Right ventricle myocardium superior (tissue), 1 donor: ENCODE measurements at regions of chr5 and their contacts with region 1.

Region 1: DNA sequence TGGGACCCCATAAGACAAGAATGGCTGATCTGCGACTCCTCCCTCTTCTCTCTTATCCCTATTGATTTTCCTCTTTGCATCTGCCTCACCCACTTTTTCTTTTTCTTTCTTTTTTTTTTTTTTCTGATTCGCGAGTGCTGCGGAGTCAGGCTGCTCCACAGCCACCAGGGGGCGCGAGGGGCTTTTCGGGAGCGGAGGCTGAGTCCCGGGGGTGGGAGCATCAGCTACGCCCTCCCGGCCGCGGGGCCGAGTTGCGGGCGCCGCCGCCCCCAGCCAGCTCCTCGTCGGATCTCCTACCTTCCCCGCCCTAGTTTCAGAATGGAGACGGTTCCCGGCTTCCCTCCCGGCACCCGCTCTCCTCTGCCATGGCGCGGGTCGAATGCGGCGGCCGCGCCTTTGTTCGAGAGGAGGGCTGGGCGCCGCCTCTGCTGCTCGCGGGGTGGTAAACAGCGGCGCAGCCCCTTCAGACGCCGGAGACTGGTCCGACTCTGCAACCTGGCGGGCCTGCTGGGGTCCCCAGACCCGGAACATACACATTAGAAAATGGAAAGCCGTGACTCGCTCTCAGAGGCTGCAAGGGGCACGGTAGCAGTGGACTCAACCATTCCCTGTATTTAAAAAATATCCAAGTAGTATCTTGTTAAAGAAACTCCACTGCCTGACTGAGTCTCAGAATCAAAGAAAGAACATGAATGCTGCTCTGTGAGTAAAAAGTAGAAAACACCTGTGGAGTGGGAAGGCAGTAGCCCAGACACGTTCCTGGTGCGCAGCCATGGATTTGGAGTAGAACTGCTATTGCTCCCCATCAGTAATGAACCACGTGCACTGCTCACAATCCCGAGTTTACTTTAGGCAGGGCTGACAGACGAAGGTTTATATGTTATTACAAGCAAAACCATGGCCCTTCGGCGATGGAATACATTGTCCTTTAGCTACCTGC is 55.7 kb downstream of the DPYSL3 start:
- DNase-seq: peak; percentile 92
- ATAC-seq: peak; percentile 93

Region 2: GRCh38 chr5:147483961-147484707 is 30.0 kb after region 1 on chr5:
- intact Hi-C with region 1: no loop called
- DNase-seq: peak; percentile 83
- ATAC-seq: peak; percentile 78

Region 3: DNA sequence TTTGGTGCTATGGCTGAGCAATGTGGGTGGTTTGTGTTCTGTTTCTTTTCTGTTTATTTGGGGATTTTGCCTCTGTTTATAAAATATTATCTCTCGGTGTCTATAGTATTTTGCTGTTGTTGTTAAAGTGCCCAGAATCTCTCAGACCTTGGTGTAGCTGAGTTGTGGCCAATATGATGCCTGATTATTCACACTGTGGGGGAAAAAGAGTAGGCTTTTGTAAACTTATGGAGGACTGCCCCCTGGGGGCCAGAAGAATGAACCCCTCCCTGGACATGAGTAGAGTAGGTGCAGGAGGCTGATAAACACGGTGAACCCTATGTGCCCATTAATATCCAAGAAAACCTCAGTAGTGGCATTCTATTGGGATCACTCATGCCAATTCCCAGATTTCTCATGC is 104.7 kb after region 1 on chr5:
- intact Hi-C with region 1: loop called (anchors 5 kb)
- DNase-seq: peak; percentile 62
- ATAC-seq: peak; percentile 74

Region 4: DNA sequence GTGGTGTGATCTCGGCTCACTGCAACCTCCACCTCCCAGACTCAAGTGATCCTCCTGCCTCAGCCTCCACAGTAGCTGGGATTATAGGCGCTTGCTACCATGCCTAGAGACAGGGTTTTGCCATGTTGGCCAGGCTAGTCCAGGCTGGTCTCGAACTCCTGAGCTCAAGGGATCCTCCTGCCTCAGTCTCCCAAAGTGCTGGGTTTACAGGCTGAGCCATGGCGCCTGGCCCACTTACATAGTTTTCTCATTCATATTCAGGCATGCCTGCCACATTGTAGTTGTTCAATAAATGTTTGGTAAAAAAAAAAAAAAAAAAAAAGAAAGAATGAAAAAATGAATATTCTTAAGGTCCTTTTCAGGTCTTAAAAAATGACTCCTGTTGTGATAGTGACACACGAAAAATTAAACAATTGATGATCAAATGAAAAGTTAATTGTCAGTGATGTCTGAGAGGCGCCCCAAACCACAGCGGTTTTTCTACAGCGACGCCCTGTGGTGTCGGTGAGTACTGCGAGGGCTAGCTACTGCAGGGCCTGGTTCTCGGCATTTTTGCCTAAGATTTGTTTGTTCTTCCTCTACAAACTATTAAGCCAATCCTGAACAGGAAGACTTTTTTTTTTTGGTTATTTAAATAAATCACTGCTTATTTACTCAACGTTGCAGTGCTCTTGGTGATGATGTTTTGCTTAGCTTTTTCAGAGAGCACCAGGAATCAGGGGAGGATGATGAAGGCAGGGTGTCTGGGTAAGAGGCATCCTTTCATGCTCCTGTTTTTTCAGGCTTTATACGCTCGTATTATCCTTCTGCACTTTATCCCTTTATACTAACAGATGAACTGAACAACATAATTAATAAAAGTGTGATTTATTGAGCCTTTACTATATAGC is 122.7 kb after region 1 on chr5:
- intact Hi-C with region 1: loop called (anchors 5 kb)
- DNase-seq: peak; percentile 81
- ATAC-seq: peak; percentile 85